Activated CD4-positive, alpha-beta memory T cell treated with anti-CD3 and anti-CD28 coated beads for 36 hours (primary cell): ENCODE measurements at regions of chr19 and their contacts with region 1.

Region 1: GRCh38 chr19:6424939-6425731 is 524 bp upstream of the KHSRP start:
- DNase-seq: peak; percentile 100
- H3K4me3 Mint-ChIP-seq: peak overlapping the region; percentile 75
- H3K27ac Mint-ChIP-seq: peak overlapping the region; percentile 92
- H3K4me1 Mint-ChIP-seq: peaks cover 36% of the 10 kb centered on the region
- H3K27me3 Mint-ChIP-seq: no peaks in the 10 kb centered on the region

Region 2: DNA sequence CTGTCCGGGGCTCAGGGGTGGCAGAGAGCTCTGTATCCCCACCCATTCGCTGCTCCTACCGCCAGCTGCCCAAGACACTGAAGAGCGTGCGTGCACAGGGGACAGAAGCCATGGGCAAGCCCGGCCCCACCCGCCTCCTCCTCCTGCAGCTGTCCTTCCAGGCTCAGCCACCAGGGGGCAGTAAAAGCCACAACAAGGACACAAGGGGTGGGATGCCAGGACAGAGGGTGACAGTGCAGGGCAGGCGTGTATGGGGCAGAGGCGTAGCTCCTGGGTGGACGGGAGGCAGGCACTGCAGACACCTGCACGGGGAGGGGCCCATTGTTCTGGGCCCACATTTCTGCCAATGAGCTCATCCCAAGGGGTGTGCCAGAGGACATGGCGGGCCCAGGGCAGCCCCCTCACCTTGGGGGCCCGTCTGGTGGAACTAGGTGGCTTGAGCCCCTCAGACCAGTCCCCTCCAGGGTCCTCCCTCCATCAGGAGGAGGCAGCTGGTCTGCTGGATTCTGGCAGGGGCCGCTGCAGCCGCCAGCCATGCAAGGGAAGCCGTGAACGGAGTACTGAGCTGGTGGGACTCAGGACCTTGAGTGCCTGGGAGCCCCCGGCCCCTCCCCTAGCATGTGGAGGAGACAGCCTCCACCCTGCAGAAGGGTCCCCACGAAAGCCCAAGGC is 206.5 kb before region 1 on chr19:
- CTCF ChIA-PET with region 1: no interaction called
- POLR2A ChIA-PET with region 1: no interaction called
- intact Hi-C with region 1: no loop called
- DNase-seq: peak; percentile 89
- H3K4me3 Mint-ChIP-seq: no peak overlapping the region
- H3K27ac Mint-ChIP-seq: no peak overlapping the region
- H3K4me1 Mint-ChIP-seq: no peaks in the 10 kb centered on the region
- H3K27me3 Mint-ChIP-seq: no peaks in the 10 kb centered on the region

Region 3: GRCh38 chr19:6279931-6280591 is 145.1 kb before region 1 on chr19 and contains the start of gene MLLT1:
- CTCF ChIA-PET with region 1: no interaction called
- POLR2A ChIA-PET with region 1: no interaction called
- intact Hi-C with region 1: loop called (anchors 1 kb)
- DNase-seq: peak; percentile 98
- H3K4me3 Mint-ChIP-seq: peak within 1 kb of the TSS; percentile 86
- H3K27ac Mint-ChIP-seq: peak within 1 kb of the TSS; percentile 84
- H3K4me1 Mint-ChIP-seq: peaks cover 34% of the 10 kb centered on the region
- H3K27me3 Mint-ChIP-seq: no peaks in the 10 kb centered on the region
- total RNA-seq, gene MLLT1: 35.7 to 37.9 TPM

Region 4: GRCh38 chr19:6372594-6373095 is 52.5 kb before region 1 on chr19 and contains the start of gene ALKBH7:
- CTCF ChIA-PET with region 1: no interaction called
- POLR2A ChIA-PET with region 1: interaction called, 15 read pairs
- intact Hi-C with region 1: loop called (anchors 1 kb)
- DNase-seq: peak; percentile 98
- H3K4me3 Mint-ChIP-seq: peak within 1 kb of the TSS; percentile 80
- H3K27ac Mint-ChIP-seq: peak within 1 kb of the TSS; percentile 88
- H3K4me1 Mint-ChIP-seq: peaks cover 11% of the 10 kb centered on the region
- H3K27me3 Mint-ChIP-seq: no peaks in the 10 kb centered on the region
- total RNA-seq, gene ALKBH7: 57.6 to 58.5 TPM

Region 5: DNA sequence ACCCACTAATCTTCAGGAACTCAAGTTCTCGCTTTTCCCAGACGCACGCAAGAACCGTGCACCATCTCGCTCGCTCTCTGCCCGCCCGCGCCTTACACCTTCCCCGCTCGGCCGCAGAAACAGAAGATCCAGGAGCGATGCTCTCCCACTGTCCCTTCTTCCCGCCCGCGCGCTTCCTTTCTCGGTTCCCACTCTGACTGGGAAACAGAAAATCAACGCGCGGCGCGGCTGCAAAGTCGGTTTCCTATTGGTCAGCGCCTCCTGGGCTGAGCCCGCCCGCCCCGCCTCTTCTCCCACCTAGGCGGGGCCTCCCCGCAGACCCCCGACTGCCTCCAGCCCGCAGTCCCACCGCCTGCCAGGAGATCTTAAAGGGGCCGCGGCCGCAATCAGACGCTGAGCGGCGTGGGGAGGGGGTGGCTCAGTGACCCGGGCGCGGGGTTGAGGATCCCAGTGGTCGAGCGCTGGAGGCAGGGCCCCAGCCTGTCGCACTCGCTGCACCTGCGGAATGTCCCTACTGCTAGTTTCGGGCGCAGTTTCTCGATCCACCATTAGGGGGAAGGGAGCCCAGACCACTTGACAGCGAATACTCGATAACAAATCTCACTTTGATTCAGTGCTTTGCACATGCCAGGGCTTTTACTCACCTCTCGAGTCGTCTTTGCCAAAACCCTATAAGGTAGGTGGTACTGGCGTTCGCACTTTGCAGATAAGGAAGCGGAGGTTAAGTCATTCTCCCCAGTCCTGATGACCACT is 35.1 kb after region 1 on chr19:
- CTCF ChIA-PET with region 1: no interaction called
- POLR2A ChIA-PET with region 1: no interaction called
- intact Hi-C with region 1: loop called (anchors 1 kb)
- DNase-seq: peak; percentile 98
- H3K4me3 Mint-ChIP-seq: peak overlapping the region; percentile 91
- H3K27ac Mint-ChIP-seq: peak overlapping the region; percentile 88
- H3K4me1 Mint-ChIP-seq: peaks cover 21% of the 10 kb centered on the region
- H3K27me3 Mint-ChIP-seq: no peaks in the 10 kb centered on the region

Region 6: DNA sequence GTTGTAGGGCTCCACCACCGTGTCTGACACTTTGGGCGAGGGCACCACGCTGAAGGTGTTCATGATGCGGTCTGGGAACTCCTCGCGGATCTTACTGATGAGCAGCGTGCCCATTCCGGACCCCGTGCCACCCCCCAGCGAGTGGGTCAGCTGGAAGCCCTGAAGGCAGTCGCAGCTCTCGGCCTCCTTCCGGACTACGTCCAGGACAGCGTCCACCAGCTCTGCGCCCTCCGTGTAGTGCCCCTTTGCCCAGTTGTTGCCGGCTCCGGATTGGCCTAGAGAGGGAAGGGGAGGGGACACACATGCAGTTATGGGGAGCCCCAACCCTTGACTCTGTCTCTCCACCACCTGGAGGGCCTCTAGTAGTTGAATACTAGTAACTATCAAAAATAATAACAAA is 70.8 kb after region 1 on chr19:
- CTCF ChIA-PET with region 1: no interaction called
- POLR2A ChIA-PET with region 1: no interaction called
- intact Hi-C with region 1: no loop called
- DNase-seq: no peak
- H3K4me3 Mint-ChIP-seq: no peak overlapping the region
- H3K27ac Mint-ChIP-seq: no peak overlapping the region
- H3K4me1 Mint-ChIP-seq: peaks cover 6% of the 10 kb centered on the region
- H3K27me3 Mint-ChIP-seq: peaks cover 4% of the 10 kb centered on the region

Region 7: GRCh38 chr19:6767357-6768235 is 342.5 kb after region 1 on chr19 and contains the start of gene SH2D3A:
- CTCF ChIA-PET with region 1: no interaction called
- POLR2A ChIA-PET with region 1: no interaction called
- intact Hi-C with region 1: loop called (anchors 1 kb)
- DNase-seq: peak; percentile 97
- H3K4me3 Mint-ChIP-seq: peak within 1 kb of the TSS; percentile 85
- H3K27ac Mint-ChIP-seq: peak within 1 kb of the TSS; percentile 92
- H3K4me1 Mint-ChIP-seq: peaks cover 39% of the 10 kb centered on the region
- H3K27me3 Mint-ChIP-seq: no peaks in the 10 kb centered on the region
- total RNA-seq, gene SH2D3A: 17.1 to 18.2 TPM